CD4-positive, alpha-beta memory T cell (primary cell): ENCODE measurements at regions of chr3 and their contacts with region 1.

Region 1: GRCh38 chr3:33096093-33096868 is 665 bp downstream of the GLB1 start:
- DNase-seq: peak; percentile 49 to 64 (median 58)
- H3K4me3 ChIP-seq: peak overlapping the region; percentile 21 to 83
- H3K4me3 Mint-ChIP-seq: peak overlapping the region; percentile 93 to 99 (median 98)
- H3K27ac ChIP-seq: peak overlapping the region; percentile 84
- H3K27ac Mint-ChIP-seq: peak overlapping the region; percentile 65 to 97 (median 93)
- H3K4me1 ChIP-seq: peaks cover 38% of the 10 kb centered on the region
- H3K4me1 Mint-ChIP-seq: peaks cover 27 to 53% (median 41%) of the 10 kb centered on the region in 4 donors
- H3K27me3 ChIP-seq: no peaks in the 10 kb centered on the region
- H3K27me3 Mint-ChIP-seq: no peaks in the 10 kb centered on the region

Region 2: GRCh38 chr3:33113772-33114621 is 17.7 kb after region 1 on chr3 and contains the start of gene CRTAP:
- CTCF ChIA-PET with region 1: interaction called, 6 read pairs
- POLR2A ChIA-PET with region 1: interaction called, 39 read pairs
- intact Hi-C with region 1: loop called (anchors 1 kb)
- DNase-seq: peak; percentile 85 to 88 (median 87)
- H3K4me3 ChIP-seq: peak within 1 kb of the TSS; percentile 71 to 83
- H3K4me3 Mint-ChIP-seq: peak within 1 kb of the TSS; percentile 83 to 92 (median 89)
- H3K27ac ChIP-seq: peak within 1 kb of the TSS; percentile 55
- H3K27ac Mint-ChIP-seq: peak within 1 kb of the TSS; percentile 75 to 94 (median 91)
- H3K4me1 ChIP-seq: peaks cover 42% of the 10 kb centered on the region
- H3K4me1 Mint-ChIP-seq: peaks cover 32 to 65% (median 48%) of the 10 kb centered on the region in 4 donors
- H3K27me3 ChIP-seq: no peaks in the 10 kb centered on the region
- H3K27me3 Mint-ChIP-seq: no peaks in the 10 kb centered on the region
- total RNA-seq, gene CRTAP: 75.4 to 84.4 TPM